Uterus (tissue), 4 donors: ENCODE measurements at regions of chr15 and their contacts with region 1.

Region 1: GRCh38 chr15:97909291-97909891 is 51.1 kb upstream of the ARRDC4 start:
- DNase-seq: peak; percentile 39 to 46
- H3K4me3 ChIP-seq: no peak overlapping the region
- H3K27ac ChIP-seq: no peak overlapping the region
- H3K4me1 ChIP-seq: no peaks in the 10 kb centered on the region
- H3K27me3 ChIP-seq: peaks cover 0 to 13% of the 10 kb centered on the region in 2 donors
- CTCF ChIP-seq: peak; percentile 59 to 80 (median 74)
- POLR2A ChIP-seq: no peak

Region 2: DNA sequence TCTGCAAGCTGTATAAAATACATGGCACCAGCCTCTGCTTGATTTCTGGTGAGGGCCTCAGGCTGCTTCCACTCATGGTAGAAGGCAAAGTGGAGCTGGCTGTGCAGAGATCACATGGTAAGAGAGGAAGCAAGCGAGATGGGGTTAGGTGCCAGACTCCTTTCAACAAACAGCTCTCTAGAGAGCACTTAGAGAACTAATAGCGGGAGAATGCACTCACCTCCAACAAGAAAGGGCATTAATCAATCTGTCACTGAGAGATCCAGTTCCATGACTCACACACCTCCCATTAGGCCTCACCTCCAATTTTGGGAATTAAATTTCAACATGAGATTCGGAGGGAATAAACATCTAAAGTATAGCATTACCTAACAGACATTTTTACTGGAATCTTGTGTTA is 593.0 kb before region 1 on chr15:
- intact Hi-C with region 1: no loop called
- DNase-seq: no peak
- H3K4me3 ChIP-seq: no peak overlapping the region
- H3K27ac ChIP-seq: no peak overlapping the region
- H3K4me1 ChIP-seq: no peaks in the 10 kb centered on the region
- H3K27me3 ChIP-seq: no peaks in the 10 kb centered on the region
- CTCF ChIP-seq: no peak
- POLR2A ChIP-seq: no peak

Region 3: GRCh38 chr15:98083203-98083910 is 174.0 kb after region 1 on chr15:
- intact Hi-C with region 1: loop called (anchors 5 kb)
- DNase-seq: no peak
- H3K4me3 ChIP-seq: no peak overlapping the region
- H3K27ac ChIP-seq: no peak overlapping the region
- H3K4me1 ChIP-seq: no peaks in the 10 kb centered on the region
- H3K27me3 ChIP-seq: no peaks in the 10 kb centered on the region
- CTCF ChIP-seq: no peak
- POLR2A ChIP-seq: no peak

Region 4: GRCh38 chr15:98187549-98187948 is 278.2 kb after region 1 on chr15:
- intact Hi-C with region 1: loop called (anchors 10 kb)
- DNase-seq: no peak
- H3K4me3 ChIP-seq: no peak overlapping the region
- H3K27ac ChIP-seq: no peak overlapping the region
- H3K4me1 ChIP-seq: no peaks in the 10 kb centered on the region
- H3K27me3 ChIP-seq: no peaks in the 10 kb centered on the region
- CTCF ChIP-seq: no peak
- POLR2A ChIP-seq: no peak